Activated CD8-positive, alpha-beta T cell treated with anti-CD3 and anti-CD28 coated beads, Interleukin-2, amount 10 ng/mL, durations not matched to agents 7 days and 5 days (primary cell): ENCODE measurements at regions of chr3 and their contacts with region 1.

Region 1: DNA sequence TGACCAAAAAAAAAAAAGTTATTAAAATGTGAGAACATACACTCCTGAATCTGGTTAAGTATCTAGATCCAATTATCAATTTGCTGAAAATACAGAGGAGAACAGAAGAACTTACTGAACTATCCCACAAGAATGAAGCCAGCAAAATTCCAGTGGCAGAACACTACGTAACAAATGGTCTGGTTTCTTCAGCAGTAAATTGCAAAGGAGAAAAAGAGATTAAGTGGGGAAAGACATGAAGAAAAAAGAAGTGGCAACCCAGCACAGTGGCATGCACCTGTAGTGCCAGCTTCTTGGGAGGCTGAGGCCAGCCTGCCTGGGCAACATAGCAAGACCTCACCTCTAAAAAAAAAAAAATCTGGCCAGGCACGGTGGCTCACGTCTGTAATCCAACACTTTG is 62.1 kb downstream of the LHFPL4 start:
- DNase-seq: no peak
- ATAC-seq: no peak
- H3K4me3 Mint-ChIP-seq: no peak overlapping the region
- H3K27ac Mint-ChIP-seq: no peak overlapping the region
- H3K4me1 Mint-ChIP-seq: peaks cover 4% of the 10 kb centered on the region
- H3K27me3 Mint-ChIP-seq: no peaks in the 10 kb centered on the region

Region 2: GRCh38 chr3:9503283-9503682 is 11.8 kb after region 1 on chr3:
- CTCF ChIA-PET with region 1: interaction called, 24 read pairs
- POLR2A ChIA-PET with region 1: no interaction called
- DNase-seq: peak; percentile 82
- ATAC-seq: peak; percentile 57
- H3K4me3 Mint-ChIP-seq: no peak overlapping the region
- H3K27ac Mint-ChIP-seq: no peak overlapping the region
- H3K4me1 Mint-ChIP-seq: peaks cover 3% of the 10 kb centered on the region
- H3K27me3 Mint-ChIP-seq: peaks cover 26% of the 10 kb centered on the region